ENCODE measurements at regions of chr11 and their contacts with region 1.

Region 1: DNA sequence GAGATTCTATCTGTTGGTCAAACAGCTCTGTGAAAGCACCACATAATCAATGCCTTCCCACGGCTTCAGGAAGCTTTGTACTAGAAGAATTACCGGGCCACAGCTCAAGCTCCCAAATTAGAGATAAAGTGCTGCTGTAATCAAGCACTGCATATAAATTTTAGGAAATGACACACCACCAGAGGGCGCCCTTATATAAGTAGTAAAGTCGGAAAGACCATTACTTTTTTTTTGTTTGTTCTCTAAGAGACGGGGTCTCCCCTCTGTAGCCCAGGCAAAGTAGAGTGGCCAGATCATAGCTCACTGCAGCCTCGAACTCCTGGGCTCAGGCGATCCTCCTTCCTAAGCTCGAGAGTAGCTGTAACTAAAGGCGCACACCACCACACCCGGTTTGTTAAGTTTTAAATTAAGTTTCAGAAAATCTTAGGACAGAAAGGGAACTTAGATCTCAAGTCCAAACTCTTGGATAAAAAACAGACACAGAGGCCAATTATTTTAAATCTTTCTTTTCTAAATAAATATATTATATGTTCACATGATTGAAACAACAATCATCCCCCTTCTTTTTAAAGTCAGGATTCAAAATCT is 32.6 kb downstream of the PRCP start:
- DNase-seq: peak; percentile 71
- H3K4me3 Mint-ChIP-seq: no peak overlapping the region
- H3K27ac Mint-ChIP-seq: no peak overlapping the region
- H3K4me1 Mint-ChIP-seq: peaks cover 23% of the 10 kb centered on the region
- H3K27me3 Mint-ChIP-seq: no peaks in the 10 kb centered on the region
- CTCF ChIP-seq: peak; percentile 75

Region 2: GRCh38 chr11:82775736-82776346 is 91.7 kb before region 1 on chr11:
- CTCF ChIA-PET with region 1: interaction called, 4 read pairs
- POLR2A ChIA-PET with region 1: no interaction called
- intact Hi-C with region 1: loop called (anchors 1 kb)
- DNase-seq: peak; percentile 76
- H3K4me3 Mint-ChIP-seq: no peak overlapping the region
- H3K27ac Mint-ChIP-seq: no peak overlapping the region
- H3K4me1 Mint-ChIP-seq: peaks cover 5% of the 10 kb centered on the region
- H3K27me3 Mint-ChIP-seq: no peaks in the 10 kb centered on the region
- CTCF ChIP-seq: peak; percentile 65

Region 3: DNA sequence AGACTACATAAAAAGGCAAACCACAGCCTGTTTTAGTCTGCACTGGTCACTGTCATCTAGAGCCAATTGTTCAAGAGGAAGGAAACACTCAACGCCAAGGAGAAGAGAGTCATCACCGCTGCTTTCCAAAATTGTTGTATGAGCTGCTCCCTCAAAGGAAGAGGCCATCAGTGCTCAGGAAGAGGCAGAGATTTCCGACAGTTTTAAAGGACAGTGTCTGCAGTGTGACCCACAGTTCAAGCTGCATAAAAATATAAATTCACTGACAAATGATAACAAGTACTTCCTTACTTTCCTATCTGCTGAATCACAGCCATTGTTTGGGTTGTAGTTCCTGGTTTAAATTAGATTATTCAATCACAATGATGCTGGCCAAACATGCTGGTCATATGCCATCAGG is 16.3 kb after region 1 on chr11:
- CTCF ChIA-PET with region 1: interaction called, 20 read pairs
- POLR2A ChIA-PET with region 1: interaction called, 5 read pairs
- intact Hi-C with region 1: no loop called
- DNase-seq: no peak
- H3K4me3 Mint-ChIP-seq: no peak overlapping the region
- H3K27ac Mint-ChIP-seq: no peak overlapping the region
- H3K4me1 Mint-ChIP-seq: no peaks in the 10 kb centered on the region
- H3K27me3 Mint-ChIP-seq: no peaks in the 10 kb centered on the region
- CTCF ChIP-seq: no peak

Region 4: DNA sequence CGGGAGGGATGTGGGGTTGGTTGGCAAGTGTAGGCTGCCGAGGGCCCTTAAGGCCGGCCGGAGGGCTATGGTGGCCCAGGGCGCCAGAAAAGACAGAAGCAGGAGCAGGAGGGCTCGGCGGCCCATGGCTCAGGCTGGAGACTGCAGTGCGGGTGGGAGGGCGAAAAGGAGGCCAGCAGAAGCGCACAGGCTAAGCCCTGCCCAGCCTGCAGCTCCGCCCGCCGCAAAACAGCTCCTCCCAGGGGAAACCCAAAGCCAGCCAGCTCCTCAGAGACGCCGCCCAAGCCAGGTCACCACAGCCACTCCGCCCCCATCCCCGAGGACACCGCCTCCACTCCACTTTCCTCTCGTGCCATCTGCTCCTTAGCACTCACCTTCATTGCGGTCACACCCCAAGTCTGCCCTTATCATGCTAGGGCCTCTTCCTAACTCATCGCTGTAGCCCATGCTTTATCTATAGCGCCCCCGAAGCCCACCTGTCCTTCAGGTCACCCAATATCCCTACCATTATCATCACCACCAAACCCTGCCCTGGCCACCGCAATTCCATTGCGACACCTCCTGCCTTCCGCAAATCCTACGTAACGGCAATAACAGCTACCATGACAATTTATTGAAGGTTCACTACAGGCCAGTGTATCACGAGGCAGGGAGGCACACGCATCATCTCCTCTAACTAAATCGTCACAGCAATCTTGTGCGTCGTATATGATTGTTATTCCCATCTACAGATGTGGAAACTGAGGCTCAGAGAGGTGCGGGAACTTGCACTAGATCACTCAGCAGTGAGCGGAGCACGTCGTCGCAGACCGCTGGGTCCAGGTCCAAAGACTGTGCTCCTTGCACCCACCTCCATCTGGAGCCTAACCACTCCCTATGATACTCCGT is 32.9 kb after region 1 on chr11 and contains the start of gene PRCP:
- CTCF ChIA-PET with region 1: interaction called, 101 read pairs
- POLR2A ChIA-PET with region 1: interaction called, 75 read pairs
- intact Hi-C with region 1: loop called (anchors 1 kb)
- DNase-seq: peak; percentile 91
- H3K4me3 Mint-ChIP-seq: peak within 1 kb of the TSS; percentile 88
- H3K27ac Mint-ChIP-seq: peak within 1 kb of the TSS; percentile 95
- H3K4me1 Mint-ChIP-seq: peaks cover 38% of the 10 kb centered on the region
- H3K27me3 Mint-ChIP-seq: no peaks in the 10 kb centered on the region
- CTCF ChIP-seq: no peak
- total RNA-seq, gene PRCP: 17.3 and 22.7 TPM in 2 replicates

Region 5: DNA sequence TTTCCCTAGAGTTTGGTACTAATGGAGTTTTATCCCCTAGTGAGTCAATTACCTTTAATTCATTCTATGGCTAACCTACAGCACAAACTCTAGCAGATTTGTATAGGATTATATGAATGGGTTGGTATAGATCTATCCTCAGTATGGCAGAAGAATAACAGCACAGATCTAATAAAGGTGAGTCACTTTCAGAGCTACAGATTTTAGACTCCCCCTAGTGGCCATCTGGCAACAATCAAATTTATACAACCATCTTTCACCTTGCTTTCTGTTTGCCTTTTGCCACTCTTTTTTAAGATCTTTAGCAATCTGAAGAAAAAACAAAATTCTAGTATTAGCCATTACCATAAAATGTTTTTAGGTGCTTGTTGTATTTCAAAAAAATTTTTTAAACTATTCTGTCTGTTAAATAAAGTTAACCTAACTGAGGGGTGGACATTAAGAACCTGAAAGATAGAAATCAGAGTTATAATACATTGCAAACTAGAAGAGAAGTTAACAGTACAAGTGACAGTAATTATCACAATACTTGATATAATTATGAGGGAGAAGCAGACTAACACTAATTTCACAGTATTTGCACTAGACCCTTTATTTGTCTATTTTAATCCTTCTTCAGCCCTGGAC is 59.8 kb after region 1 on chr11:
- CTCF ChIA-PET with region 1: interaction called, 24 read pairs
- POLR2A ChIA-PET with region 1: interaction called, 3 read pairs
- intact Hi-C with region 1: loop called (anchors 1 kb)
- DNase-seq: peak; percentile 73
- H3K4me3 Mint-ChIP-seq: no peak overlapping the region
- H3K27ac Mint-ChIP-seq: no peak overlapping the region
- H3K4me1 Mint-ChIP-seq: no peaks in the 10 kb centered on the region
- H3K27me3 Mint-ChIP-seq: no peaks in the 10 kb centered on the region
- CTCF ChIP-seq: peak; percentile 50

Region 6: GRCh38 chr11:83026229-83026628 is 158.6 kb after region 1 on chr11:
- CTCF ChIA-PET with region 1: no interaction called
- POLR2A ChIA-PET with region 1: no interaction called
- intact Hi-C with region 1: no loop called
- DNase-seq: no peak
- H3K4me3 Mint-ChIP-seq: no peak overlapping the region
- H3K27ac Mint-ChIP-seq: no peak overlapping the region
- H3K4me1 Mint-ChIP-seq: peaks cover 16% of the 10 kb centered on the region
- H3K27me3 Mint-ChIP-seq: no peaks in the 10 kb centered on the region
- CTCF ChIP-seq: no peak

Region 7: DNA sequence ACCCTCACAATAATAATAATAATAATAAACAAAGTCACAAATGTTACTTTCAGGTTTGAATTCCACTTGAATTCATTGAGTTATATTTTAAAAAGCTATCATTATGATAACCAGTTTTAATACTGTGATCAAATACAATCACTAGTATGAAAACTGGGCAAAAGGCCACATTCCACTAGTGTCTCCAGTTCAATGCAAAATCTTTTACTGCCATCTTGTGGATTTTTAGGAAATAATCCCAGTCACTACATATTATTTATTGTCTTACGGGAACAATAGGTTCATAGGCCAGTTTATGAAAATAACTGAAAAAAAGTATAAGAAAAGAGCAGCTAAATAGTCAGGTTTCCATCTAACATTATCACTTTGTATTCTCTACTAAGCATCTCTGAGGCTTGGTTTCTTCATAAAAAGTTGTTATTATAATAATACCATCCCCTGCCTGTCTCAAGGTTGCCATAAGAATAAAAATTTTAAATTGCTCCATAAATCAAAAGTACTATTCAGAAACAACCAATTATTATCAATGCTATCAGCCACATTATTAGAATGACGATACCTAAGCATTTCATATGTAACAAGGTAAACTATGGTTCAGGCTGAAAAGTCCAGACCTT is 952.5 kb after region 1 on chr11:
- CTCF ChIA-PET with region 1: interaction called, 20 read pairs
- POLR2A ChIA-PET with region 1: no interaction called
- intact Hi-C with region 1: loop called (anchors 1 kb)
- DNase-seq: peak; percentile 68
- H3K4me3 Mint-ChIP-seq: no peak overlapping the region
- H3K27ac Mint-ChIP-seq: no peak overlapping the region
- H3K4me1 Mint-ChIP-seq: no peaks in the 10 kb centered on the region
- H3K27me3 Mint-ChIP-seq: peaks cover 27% of the 10 kb centered on the region
- CTCF ChIP-seq: peak; percentile 58

Measured in MCF 10A (cell line).